Ascending aorta (tissue), 2 donors: ENCODE measurements at regions of chr14 and their contacts with region 1.

Region 1: GRCh38 chr14:93788543-93789227 is 400 bp upstream of the PRIMA1 start:
- DNase-seq: peak in 1 of 2 donors; percentile 70
- H3K4me3 ChIP-seq: peak overlapping the region; percentile 55 to 84
- H3K27ac ChIP-seq: peak overlapping the region; percentile 77 to 80
- H3K4me1 ChIP-seq: peaks cover 0 to 17% of the 10 kb centered on the region in 2 donors
- H3K27me3 ChIP-seq: no peaks in the 10 kb centered on the region
- CTCF ChIP-seq: peak in 2 of 3 experiments; percentile 50 to 70

Region 2: GRCh38 chr14:93655078-93655750 is 133.5 kb before region 1 on chr14:
- intact Hi-C with region 1: loop called (anchors 1 kb)
- DNase-seq: no peak
- H3K4me3 ChIP-seq: no peak overlapping the region
- H3K27ac ChIP-seq: no peak overlapping the region
- H3K4me1 ChIP-seq: no peaks in the 10 kb centered on the region
- H3K27me3 ChIP-seq: no peaks in the 10 kb centered on the region
- CTCF ChIP-seq: peak; percentile 45 to 68 (median 60)

Region 3: DNA sequence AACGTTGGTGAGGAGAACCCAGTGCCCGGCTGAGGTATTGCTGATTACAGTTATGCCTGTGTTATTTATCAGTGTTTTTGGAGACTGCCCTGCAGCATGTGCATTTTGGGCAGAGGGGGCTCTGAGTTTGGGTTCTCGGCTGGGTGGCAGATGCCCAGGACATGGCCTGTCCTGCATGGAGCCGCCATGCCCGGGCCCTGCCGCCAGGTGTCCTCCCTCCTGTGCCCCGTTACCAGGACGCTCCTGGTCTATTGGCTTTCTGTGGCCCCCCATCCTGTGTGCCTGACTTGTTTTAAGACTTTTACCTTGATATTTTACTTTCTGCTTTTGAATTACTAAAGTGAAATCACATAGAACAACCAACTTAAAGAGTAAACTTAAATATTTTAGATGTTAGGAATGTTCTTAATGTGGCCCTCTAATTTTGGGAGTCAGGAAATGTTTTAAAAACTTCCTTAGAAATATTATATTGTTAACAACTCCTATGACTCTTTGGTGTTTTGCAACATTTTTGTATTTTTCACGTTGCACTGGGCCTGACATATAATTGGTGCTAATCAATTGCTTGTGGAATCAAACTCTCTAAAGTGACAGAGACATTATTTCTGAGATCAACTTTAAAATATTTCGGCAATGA is 52.2 kb before region 1 on chr14:
- intact Hi-C with region 1: loop called (anchors 2 kb)
- DNase-seq: no peak
- H3K4me3 ChIP-seq: no peak overlapping the region
- H3K27ac ChIP-seq: no peak overlapping the region
- H3K4me1 ChIP-seq: no peaks in the 10 kb centered on the region
- H3K27me3 ChIP-seq: no peaks in the 10 kb centered on the region
- CTCF ChIP-seq: peak in 2 of 3 experiments; percentile 19 to 33

Region 4: GRCh38 chr14:93772263-93772662 is 16.4 kb before region 1 on chr14:
- intact Hi-C with region 1: loop called (anchors 2 kb)
- DNase-seq: peak; percentile 17 to 83
- H3K4me3 ChIP-seq: no peak overlapping the region
- H3K27ac ChIP-seq: peak overlapping the region; percentile 54 to 64
- H3K4me1 ChIP-seq: peaks cover 0 to 3% of the 10 kb centered on the region in 2 donors
- H3K27me3 ChIP-seq: no peaks in the 10 kb centered on the region
- CTCF ChIP-seq: no peak

Region 5: DNA sequence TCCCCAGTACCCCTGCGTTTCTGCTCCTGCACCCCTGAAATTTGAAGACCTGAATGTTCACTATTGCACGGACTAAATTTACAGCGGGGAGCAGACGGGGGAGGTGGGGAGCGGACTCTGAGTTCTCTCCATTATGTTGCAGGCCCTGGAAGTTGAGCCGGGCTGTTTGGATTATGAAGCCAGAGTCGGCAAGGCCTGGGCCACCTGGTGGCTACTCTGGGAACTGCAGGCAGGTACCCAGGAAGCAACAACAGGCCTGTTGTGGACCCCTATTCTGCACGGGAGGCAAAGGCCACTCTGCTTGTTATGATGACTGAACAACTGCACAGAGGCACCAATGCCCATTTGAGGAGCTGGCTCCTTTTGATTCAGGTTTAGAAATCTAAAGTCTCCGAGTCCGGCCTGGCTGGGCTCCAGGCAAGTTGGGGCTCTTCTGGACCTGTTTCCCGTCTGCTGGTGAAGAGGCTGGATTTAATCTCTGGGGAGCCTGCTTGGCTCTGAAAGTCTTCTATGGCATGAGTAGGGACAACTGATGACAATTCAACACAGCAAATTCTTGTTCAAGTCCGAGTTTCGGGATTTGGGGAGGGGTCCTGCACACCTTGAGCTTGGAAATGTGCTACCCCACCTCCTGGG is 104.4 kb after region 1 on chr14:
- intact Hi-C with region 1: loop called (anchors 2 kb)
- DNase-seq: peak in 1 of 2 donors; percentile 84
- H3K4me3 ChIP-seq: no peak overlapping the region
- H3K27ac ChIP-seq: no peak overlapping the region
- H3K4me1 ChIP-seq: peaks cover 0 to 8% of the 10 kb centered on the region in 2 donors
- H3K27me3 ChIP-seq: no peaks in the 10 kb centered on the region
- CTCF ChIP-seq: peak; percentile 79 to 99 (median 98)

Region 6: DNA sequence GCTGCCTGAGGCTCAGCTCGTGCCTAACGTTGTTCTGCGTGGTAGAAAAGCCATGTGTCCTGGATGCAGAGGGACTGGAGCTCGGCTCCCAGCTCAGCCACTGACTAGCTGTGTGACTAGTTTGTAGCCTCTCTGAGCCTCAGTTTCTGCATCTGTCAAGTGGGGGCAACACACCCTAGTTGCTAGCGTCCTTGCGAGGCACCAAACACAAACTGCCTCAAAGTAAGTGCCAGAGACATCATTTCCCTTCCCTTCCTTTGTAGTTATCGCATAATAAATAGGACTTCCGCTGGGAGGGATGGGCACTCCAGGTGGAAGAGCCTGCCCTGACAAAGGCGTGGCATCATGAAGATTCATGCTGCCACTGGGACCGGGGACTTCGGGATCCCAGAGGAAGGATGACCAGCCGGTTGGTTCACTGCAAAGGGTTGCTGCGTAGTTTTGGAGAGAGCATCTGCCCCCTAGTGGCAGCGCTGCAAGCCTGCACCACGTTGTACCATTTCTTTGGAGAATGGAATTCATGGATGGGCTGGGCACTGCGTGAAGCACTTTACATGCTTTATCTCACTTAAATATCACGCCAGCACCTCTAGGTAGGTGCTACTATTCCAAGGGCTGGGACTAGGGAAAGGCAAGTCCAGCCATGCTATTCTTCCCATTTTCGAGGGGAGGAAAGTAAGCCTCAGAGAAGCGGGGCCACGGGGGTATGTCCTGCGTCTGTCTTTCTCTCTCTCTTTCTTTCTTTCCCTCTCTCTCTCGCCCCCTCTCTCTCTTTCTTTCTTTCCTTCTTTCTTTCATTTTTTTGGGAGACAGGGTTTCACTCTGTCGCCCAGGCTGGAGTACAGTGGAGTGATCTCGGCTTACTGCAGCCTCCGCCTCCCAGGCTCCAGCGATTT is 213.1 kb after region 1 on chr14:
- intact Hi-C with region 1: loop called (anchors 10 kb)
- DNase-seq: no peak
- H3K4me3 ChIP-seq: no peak overlapping the region
- H3K27ac ChIP-seq: no peak overlapping the region
- H3K4me1 ChIP-seq: peaks cover 0 to 9% of the 10 kb centered on the region in 2 donors
- H3K27me3 ChIP-seq: no peaks in the 10 kb centered on the region
- CTCF ChIP-seq: peak; percentile 93 to 96 (median 96)

Region 7: GRCh38 chr14:94173885-94174603 is 385.4 kb after region 1 on chr14 and contains the start of gene PPP4R4:
- intact Hi-C with region 1: loop called (anchors 10 kb)
- DNase-seq: peak; percentile 63 to 92
- H3K4me3 ChIP-seq: peak within 1 kb of the TSS; percentile 75 to 84
- H3K27ac ChIP-seq: peak within 1 kb of the TSS; percentile 50 to 61
- H3K4me1 ChIP-seq: peaks cover 3 to 14% of the 10 kb centered on the region in 2 donors
- H3K27me3 ChIP-seq: no peaks in the 10 kb centered on the region
- CTCF ChIP-seq: no peak
- total RNA-seq, gene PPP4R4: not detected

Region 8: DNA sequence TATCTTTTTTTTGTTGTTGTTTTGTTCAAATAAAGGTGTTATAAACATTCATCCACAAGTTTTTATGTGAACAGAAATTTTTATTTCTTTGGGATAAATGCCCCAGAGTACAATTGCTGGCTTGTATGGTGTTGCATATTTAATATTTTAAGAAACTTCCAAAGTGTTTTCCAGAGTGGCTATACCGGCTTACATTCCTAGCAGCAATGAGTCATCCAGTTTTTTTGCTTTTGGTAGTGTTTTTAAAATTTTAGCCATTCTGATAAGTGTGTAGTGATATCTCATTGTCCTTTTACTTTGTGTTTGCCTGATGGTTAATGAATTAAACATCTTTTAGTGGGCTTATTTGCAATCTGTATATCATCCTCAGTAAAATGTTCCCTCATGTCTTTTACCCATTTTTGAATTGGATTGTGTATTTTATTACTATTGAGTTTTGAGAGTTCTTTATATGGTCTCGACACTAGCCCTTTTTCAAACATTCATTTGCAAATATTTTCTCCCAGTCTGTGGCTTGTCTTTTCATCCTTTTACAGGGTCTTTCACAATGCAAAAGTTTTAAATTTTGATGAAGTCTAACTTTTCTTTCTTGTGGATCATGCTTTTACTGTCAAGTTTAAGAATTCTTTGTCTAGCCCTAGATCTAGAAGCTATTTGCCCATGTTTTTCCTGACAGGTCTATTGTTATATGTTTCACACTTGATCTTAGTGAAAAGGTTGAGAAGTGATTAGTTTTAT is 415.0 kb after region 1 on chr14:
- intact Hi-C with region 1: no loop called
- DNase-seq: no peak
- H3K4me3 ChIP-seq: no peak overlapping the region
- H3K27ac ChIP-seq: no peak overlapping the region
- H3K4me1 ChIP-seq: no peaks in the 10 kb centered on the region
- H3K27me3 ChIP-seq: no peaks in the 10 kb centered on the region
- CTCF ChIP-seq: no peak